ENCODE measurements at regions of chr17 and their contacts with region 1.

Region 1: DNA sequence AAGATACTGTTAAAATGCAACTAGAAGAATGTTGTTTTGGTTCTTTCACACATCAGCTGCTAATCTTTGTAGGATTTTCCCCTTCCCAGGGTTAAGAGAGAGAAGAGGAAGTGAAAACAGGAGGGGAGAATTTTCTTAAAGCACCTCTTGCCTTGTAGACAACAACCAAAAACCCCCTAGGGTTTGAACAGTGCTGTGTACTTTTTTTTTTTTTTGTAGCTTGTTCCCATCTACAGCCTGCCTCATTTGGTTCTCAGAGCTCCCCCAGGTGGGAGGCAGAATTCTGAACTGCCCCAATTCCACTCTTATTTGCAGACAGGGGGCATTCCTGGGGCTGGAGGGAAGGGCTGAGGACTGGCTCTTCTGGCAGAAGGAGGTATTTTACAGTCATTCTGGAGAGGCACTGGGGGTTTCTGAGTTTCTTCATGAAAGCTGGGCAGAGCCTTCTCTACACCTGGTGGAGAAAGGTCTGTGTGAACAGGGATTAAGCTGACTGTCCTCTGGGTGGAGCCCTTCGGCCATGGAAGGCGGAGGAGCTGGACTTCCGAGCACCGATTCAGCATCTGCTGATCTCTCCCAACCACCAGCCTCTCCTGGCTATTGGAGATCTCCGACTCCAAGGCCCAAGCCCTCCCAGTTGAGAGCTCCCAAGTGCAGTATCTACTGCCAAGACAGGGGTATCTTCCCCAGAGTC is 32.2 kb downstream of the SMARCE1 start:
- DNase-seq: peak; percentile 64
- ATAC-seq: peak; percentile 35
- H3K4me3 Mint-ChIP-seq: peak overlapping the region; percentile 54
- H3K27ac Mint-ChIP-seq: peak overlapping the region; percentile 91
- H3K4me1 Mint-ChIP-seq: peaks cover 77% of the 10 kb centered on the region
- H3K27me3 Mint-ChIP-seq: no peaks in the 10 kb centered on the region

Region 2: DNA sequence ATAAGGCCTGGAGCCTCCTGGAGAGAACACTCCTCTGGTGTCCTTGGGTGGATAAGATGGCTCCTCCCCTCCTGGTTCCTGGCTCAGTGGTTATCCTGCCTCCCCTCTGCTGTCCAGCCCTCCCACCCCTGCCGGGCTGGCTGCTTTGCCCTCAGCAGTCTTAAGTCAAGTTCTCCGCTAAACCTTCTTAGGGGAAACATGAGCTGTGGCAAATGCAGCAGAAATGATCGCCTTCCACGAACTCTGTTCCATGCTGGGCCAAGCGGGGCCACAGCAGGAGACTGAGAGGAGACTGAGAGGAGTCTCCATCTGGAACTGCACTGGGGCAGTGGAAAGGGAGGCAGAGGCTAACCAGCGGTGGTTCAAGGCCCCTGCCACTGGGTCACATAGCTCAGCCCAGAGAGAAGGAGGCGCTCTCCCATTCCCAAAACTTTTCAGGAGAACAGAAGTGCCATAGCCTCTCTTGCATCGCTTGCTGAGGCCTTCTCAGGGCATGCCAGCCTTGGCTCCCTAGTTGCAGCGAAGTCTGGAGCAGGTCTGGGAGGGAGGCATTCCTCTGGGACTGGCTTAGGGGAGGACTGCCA is 140.9 kb before region 1 on chr17:
- CTCF ChIA-PET with region 1: no interaction called
- POLR2A ChIA-PET with region 1: interaction called, 14 read pairs
- intact Hi-C with region 1: no loop called
- DNase-seq: no peak
- ATAC-seq: no peak
- H3K4me3 Mint-ChIP-seq: no peak overlapping the region
- H3K27ac Mint-ChIP-seq: no peak overlapping the region
- H3K4me1 Mint-ChIP-seq: peaks cover 17% of the 10 kb centered on the region
- H3K27me3 Mint-ChIP-seq: no peaks in the 10 kb centered on the region

Region 3: GRCh38 chr17:40582328-40582901 is 33.0 kb before region 1 on chr17:
- CTCF ChIA-PET with region 1: interaction called, 8 read pairs
- POLR2A ChIA-PET with region 1: interaction called, 10 read pairs
- intact Hi-C with region 1: no loop called
- DNase-seq: peak; percentile 82
- ATAC-seq: peak; percentile 68
- H3K4me3 Mint-ChIP-seq: peak overlapping the region; percentile 50
- H3K27ac Mint-ChIP-seq: peak overlapping the region; percentile 93
- H3K4me1 Mint-ChIP-seq: peaks cover 91% of the 10 kb centered on the region
- H3K27me3 Mint-ChIP-seq: no peaks in the 10 kb centered on the region

Region 4: DNA sequence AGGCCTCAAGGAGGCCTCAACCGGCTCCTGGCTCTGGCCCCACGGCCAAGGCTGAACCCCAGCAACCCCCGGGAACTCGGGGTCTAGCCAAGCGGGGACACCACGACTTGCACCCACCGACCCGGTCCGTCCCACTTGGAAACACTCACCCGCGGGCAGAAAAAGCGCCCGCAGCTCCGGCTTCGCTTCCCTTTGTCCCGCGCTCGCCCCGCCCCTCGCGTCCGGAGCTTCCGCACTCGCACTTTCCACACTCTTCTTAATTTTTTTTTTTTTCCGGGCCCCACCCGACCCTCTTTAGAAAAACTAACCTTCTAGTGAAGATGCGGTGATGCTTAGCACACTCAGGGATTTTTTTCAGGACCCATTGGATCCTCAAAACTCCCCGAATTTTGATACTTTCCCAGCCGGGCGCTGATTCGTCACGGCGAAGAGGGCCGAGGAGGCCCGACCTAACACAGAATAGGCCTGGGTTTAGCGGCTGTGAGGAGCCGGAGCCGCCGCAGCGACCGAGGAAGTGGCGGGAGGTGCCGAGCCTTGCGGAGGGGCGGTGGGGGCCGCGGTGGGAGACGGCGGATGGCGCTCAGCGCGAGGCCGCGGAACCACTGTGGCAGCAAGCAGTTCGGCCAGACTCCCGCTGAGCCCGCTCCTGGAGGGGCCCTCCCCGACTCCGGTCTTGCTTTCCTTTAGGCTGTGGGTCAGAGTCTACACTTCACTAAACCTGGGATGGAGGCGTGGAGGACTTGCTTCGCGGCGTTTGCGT is 32.4 kb after region 1 on chr17 and contains the start of gene SMARCE1:
- CTCF ChIA-PET with region 1: interaction called, 14 read pairs
- POLR2A ChIA-PET with region 1: interaction called, 6 read pairs
- intact Hi-C with region 1: loop called (anchors 1 to 2 kb)
- DNase-seq: peak; percentile 79
- ATAC-seq: peak; percentile 81
- H3K4me3 Mint-ChIP-seq: peak within 1 kb of the TSS; percentile 97
- H3K27ac Mint-ChIP-seq: peak within 1 kb of the TSS; percentile 99
- H3K4me1 Mint-ChIP-seq: peaks cover 40% of the 10 kb centered on the region
- H3K27me3 Mint-ChIP-seq: no peaks in the 10 kb centered on the region
- total RNA-seq, gene SMARCE1: 99.7 to 122 TPM

Region 5: DNA sequence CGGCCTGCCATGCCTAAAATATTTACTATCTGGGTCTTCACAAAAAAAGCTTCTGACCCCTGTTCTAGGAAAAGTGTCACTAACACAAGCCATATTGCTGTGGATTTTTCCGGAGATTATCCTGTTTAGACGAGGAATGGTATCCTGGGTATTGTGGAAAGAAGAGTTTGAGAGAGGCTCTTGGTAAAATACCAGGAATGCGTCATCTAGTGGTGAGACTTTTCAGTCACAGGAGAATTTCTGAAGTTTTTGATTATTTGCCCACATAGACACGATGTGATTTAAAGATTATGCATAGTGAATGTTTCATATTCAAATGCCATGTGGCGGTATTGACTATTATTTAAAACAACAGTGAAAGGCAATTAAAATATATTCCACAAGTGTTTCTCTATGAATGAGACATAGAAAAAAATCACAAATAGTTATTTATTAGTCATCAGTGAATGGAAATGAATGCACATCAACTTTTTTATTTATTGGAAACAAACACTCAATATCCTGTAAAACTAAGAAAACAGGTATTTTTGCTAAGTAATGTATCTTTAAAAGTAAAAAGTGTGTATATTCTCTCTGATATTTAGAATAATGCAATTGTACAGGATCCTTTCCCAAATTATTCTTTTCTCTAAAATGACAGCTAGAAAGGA is 176.5 kb after region 1 on chr17:
- CTCF ChIA-PET with region 1: no interaction called
- POLR2A ChIA-PET with region 1: no interaction called
- intact Hi-C with region 1: loop called (anchors 1 to 5 kb)
- DNase-seq: no peak
- ATAC-seq: no peak
- H3K4me3 Mint-ChIP-seq: no peak overlapping the region
- H3K27ac Mint-ChIP-seq: no peak overlapping the region
- H3K4me1 Mint-ChIP-seq: no peaks in the 10 kb centered on the region
- H3K27me3 Mint-ChIP-seq: peaks cover 17% of the 10 kb centered on the region

Region 6: GRCh38 chr17:40854159-40854814 is 238.8 kb after region 1 on chr17:
- CTCF ChIA-PET with region 1: no interaction called
- POLR2A ChIA-PET with region 1: no interaction called
- intact Hi-C with region 1: no loop called
- DNase-seq: no peak
- ATAC-seq: peak; percentile 44
- H3K4me3 Mint-ChIP-seq: no peak overlapping the region
- H3K27ac Mint-ChIP-seq: no peak overlapping the region
- H3K4me1 Mint-ChIP-seq: no peaks in the 10 kb centered on the region
- H3K27me3 Mint-ChIP-seq: peaks cover 17% of the 10 kb centered on the region

Region 7: DNA sequence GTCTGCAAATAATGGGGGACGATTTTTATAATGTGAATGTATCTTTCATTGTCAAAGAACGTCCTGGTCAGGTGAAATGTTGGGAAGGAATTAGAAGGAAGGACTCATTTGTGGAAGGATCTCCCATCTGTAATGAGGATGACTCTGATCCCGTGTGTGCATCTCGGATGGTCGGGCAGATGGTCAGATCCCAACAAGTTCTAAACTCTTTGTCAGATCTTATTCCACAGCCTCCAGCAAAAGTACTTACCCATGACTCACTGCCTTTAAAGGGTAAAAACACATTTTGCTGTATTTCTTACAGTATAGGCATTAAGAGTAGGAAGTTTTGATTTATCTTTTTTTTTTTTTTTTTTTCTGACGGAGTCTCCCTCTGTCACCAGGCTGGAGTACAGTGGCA is 483.0 kb after region 1 on chr17:
- CTCF ChIA-PET with region 1: no interaction called
- POLR2A ChIA-PET with region 1: no interaction called
- intact Hi-C with region 1: no loop called
- DNase-seq: no peak
- ATAC-seq: no peak
- H3K4me3 Mint-ChIP-seq: no peak overlapping the region
- H3K27ac Mint-ChIP-seq: no peak overlapping the region
- H3K4me1 Mint-ChIP-seq: peaks cover 8% of the 10 kb centered on the region
- H3K27me3 Mint-ChIP-seq: peaks cover 8% of the 10 kb centered on the region

Region 8: GRCh38 chr17:41678907-41679739 is 1063.7 kb after region 1 on chr17:
- CTCF ChIA-PET with region 1: no interaction called
- POLR2A ChIA-PET with region 1: no interaction called
- intact Hi-C with region 1: loop called in 1 of 2 experiments (anchors 5 kb)
- DNase-seq: peak; percentile 79
- ATAC-seq: peak; percentile 91
- H3K4me3 Mint-ChIP-seq: peak overlapping the region; percentile 72
- H3K27ac Mint-ChIP-seq: peak overlapping the region; percentile 94
- H3K4me1 Mint-ChIP-seq: peaks cover 32% of the 10 kb centered on the region
- H3K27me3 Mint-ChIP-seq: no peaks in the 10 kb centered on the region

Measured in activated CD4-positive, alpha-beta T cell treated with anti-CD3 and anti-CD28 coated beads for 36 hours (primary cell).